RWPE1 (cell line): ENCODE measurements at regions of chr17 and their contacts with region 1.

Region 1: GRCh38 chr17:17280613-17281549 is at the start of gene COPS3:
- DNase-seq: peak; percentile 99
- H3K27ac ChIP-seq: peak within 1 kb of the TSS; percentile 90
- CTCF ChIP-seq: no peak

Region 2: GRCh38 chr17:16973760-16974540 is 306.9 kb before region 1 on chr17:
- CTCF ChIA-PET with region 1: no interaction called
- POLR2A ChIA-PET with region 1: no interaction called
- DNase-seq: no peak
- H3K27ac ChIP-seq: no peak overlapping the region
- CTCF ChIP-seq: no peak

Region 3: DNA sequence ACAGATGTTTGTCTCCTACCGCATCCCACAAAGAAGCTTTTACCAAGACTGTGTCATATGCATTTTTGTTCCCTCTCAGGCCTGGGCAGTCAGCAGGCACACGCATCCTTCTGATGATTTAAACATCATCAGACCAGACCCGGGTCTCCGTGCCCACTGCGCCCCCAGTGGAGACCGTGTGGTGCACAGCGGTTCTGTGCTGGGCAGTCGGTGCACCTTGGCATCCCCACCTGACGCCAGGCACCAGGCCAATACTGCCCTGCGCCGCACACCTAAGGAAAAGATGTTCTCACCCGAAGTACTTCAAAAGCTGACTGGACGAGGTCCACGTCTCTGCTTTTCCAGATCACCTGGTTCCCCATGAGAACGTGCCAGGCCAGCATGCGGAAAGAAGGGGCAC is 64.1 kb before region 1 on chr17:
- CTCF ChIA-PET with region 1: no interaction called
- POLR2A ChIA-PET with region 1: no interaction called
- DNase-seq: no peak
- H3K27ac ChIP-seq: 0 out of 2 replicates have a peak overlapping the region, but pooled peaks have one; percentile 17
- CTCF ChIP-seq: no peak

Region 4: GRCh38 chr17:17231620-17232302 is 49.1 kb before region 1 on chr17:
- CTCF ChIA-PET with region 1: no interaction called
- POLR2A ChIA-PET with region 1: no interaction called
- DNase-seq: no peak
- H3K27ac ChIP-seq: no peak overlapping the region
- CTCF ChIP-seq: no peak

Region 5: GRCh38 chr17:17313350-17313991 is 32.6 kb after region 1 on chr17:
- CTCF ChIA-PET with region 1: interaction called, 10 read pairs
- POLR2A ChIA-PET with region 1: no interaction called
- DNase-seq: peak; percentile 77
- H3K27ac ChIP-seq: no peak overlapping the region
- CTCF ChIP-seq: peak; percentile 79

Region 6: GRCh38 chr17:17526369-17526768 is 245.5 kb after region 1 on chr17:
- CTCF ChIA-PET with region 1: no interaction called
- POLR2A ChIA-PET with region 1: no interaction called
- DNase-seq: no peak
- H3K27ac ChIP-seq: no peak overlapping the region
- CTCF ChIP-seq: no peak